Activated CD8-positive, alpha-beta T cell treated with anti-CD3 and anti-CD28 coated beads for 36 hours (primary cell): ENCODE measurements at regions of chr6 and their contacts with region 1.

Region 1: DNA sequence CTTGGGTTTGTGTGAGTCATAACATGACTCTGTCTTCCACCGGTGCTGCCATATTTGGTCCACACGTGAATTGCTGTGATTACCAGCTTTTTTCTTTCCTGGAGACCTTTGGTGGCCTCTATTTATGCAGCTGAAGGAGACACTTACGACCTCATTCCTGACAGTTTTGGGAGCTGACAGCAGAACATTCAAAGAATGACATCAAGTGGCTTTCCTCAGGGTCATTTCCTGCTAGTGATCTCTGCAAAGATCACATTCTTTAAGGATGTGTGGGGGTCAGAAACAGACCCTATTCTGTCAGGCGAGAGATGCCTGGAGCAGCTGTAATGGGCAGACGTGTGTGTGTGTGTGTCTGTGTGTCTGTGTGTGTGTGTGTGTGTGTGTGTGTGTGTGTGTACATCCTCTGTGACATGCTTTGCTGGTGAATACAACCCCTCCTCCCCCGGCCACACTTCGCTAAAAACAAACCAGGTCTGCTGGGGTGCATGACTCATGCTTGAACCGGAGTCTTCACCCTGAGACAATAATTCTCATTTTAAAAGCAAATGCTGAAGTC is 115.6 kb downstream of the TMEM170B start:
- DNase-seq: peak; percentile 78
- ATAC-seq: peak; percentile 90
- H3K4me3 Mint-ChIP-seq: no peak overlapping the region
- H3K27ac Mint-ChIP-seq: no peak overlapping the region
- H3K4me1 Mint-ChIP-seq: peaks cover 16% of the 10 kb centered on the region
- H3K27me3 Mint-ChIP-seq: peaks cover 10% of the 10 kb centered on the region
- CTCF ChIP-seq: no peak

Region 2: GRCh38 chr6:11665604-11666326 is 12.7 kb after region 1 on chr6:
- CTCF ChIA-PET with region 1: interaction called, 46 read pairs
- POLR2A ChIA-PET with region 1: no interaction called
- intact Hi-C with region 1: no loop called
- DNase-seq: no peak
- ATAC-seq: no peak
- H3K4me3 Mint-ChIP-seq: no peak overlapping the region
- H3K27ac Mint-ChIP-seq: no peak overlapping the region
- H3K4me1 Mint-ChIP-seq: peaks cover 10% of the 10 kb centered on the region
- H3K27me3 Mint-ChIP-seq: peaks cover 9% of the 10 kb centered on the region
- CTCF ChIP-seq: no peak

Region 3: DNA sequence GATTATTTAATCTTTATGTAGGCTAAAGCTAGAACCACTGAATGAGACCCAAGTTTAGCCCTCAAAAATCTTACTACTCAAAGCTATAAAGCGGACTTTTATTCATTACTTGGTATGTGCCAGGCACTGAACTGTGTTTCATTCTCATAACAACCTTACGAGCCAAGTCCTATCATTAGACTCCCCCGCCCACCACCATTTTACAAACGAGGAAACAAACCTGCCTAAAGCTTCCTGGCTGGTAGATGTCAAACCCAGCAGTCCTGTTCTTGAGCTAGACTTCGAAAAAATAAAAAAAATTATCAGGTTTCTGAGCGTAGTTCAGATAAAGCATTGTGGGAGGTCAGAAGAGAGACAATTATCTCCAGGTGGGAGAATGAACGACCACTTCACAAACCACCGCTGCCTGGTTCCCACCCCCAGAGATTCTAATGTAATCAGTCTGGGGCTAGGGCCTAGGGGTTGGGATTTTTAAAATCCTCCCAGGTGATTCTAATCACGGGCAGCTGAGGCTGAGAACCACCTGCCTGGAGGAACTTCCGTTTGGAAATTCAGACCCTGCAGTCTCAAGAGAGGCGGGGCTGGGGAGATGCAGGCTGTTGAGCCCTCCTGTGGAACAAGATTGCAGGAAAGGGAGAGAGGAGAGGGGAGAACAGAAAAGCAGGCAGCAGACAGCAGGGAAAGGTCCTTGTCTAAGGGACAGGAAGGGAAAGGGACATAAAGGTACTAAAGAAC is 116.9 kb after region 1 on chr6:
- CTCF ChIA-PET with region 1: no interaction called
- POLR2A ChIA-PET with region 1: no interaction called
- intact Hi-C with region 1: no loop called
- DNase-seq: no peak
- ATAC-seq: no peak
- H3K4me3 Mint-ChIP-seq: no peak overlapping the region
- H3K27ac Mint-ChIP-seq: no peak overlapping the region
- H3K4me1 Mint-ChIP-seq: peaks cover 16% of the 10 kb centered on the region
- H3K27me3 Mint-ChIP-seq: no peaks in the 10 kb centered on the region
- CTCF ChIP-seq: no peak

Region 4: GRCh38 chr6:11810039-11810541 is 157.0 kb after region 1 on chr6:
- CTCF ChIA-PET with region 1: no interaction called
- POLR2A ChIA-PET with region 1: no interaction called
- intact Hi-C with region 1: no loop called
- DNase-seq: no peak
- ATAC-seq: no peak
- H3K4me3 Mint-ChIP-seq: no peak overlapping the region
- H3K27ac Mint-ChIP-seq: no peak overlapping the region
- H3K4me1 Mint-ChIP-seq: peaks cover 34% of the 10 kb centered on the region
- H3K27me3 Mint-ChIP-seq: no peaks in the 10 kb centered on the region
- CTCF ChIP-seq: no peak

Region 5: GRCh38 chr6:12233693-12234571 is 580.8 kb after region 1 on chr6:
- CTCF ChIA-PET with region 1: interaction called, 24 read pairs
- POLR2A ChIA-PET with region 1: no interaction called
- intact Hi-C with region 1: loop called (anchors 5 kb)
- DNase-seq: peak; percentile 62
- ATAC-seq: peak; percentile 94
- H3K4me3 Mint-ChIP-seq: no peak overlapping the region
- H3K27ac Mint-ChIP-seq: no peak overlapping the region
- H3K4me1 Mint-ChIP-seq: peaks cover 42% of the 10 kb centered on the region
- H3K27me3 Mint-ChIP-seq: no peaks in the 10 kb centered on the region
- CTCF ChIP-seq: peak; percentile 72

Region 6: DNA sequence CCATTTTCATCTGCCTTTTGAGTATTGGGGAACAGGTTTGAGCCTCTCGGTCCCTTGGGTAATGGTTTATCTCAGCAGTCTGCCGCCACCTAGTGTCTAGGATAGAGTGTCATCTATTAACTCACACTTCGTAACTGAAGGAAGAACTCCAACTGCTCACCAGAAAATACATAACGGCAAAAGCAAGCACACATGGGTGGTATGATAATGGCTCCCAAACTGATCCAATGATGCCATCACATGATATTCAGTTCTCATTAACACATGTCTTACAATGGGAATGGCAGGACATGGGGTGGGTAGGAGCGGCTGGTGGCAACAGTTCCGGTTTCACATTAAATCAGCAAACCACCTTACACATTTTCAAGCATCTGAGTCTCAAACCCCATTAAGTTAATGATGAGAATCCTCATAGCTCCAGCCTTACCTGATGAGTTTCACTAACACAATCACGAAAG is 952.8 kb after region 1 on chr6:
- CTCF ChIA-PET with region 1: interaction called, 7 read pairs
- POLR2A ChIA-PET with region 1: no interaction called
- intact Hi-C with region 1: loop called (anchors 10 kb)
- DNase-seq: peak; percentile 62
- ATAC-seq: peak; percentile 75
- H3K4me3 Mint-ChIP-seq: no peak overlapping the region
- H3K27ac Mint-ChIP-seq: no peak overlapping the region
- H3K4me1 Mint-ChIP-seq: no peaks in the 10 kb centered on the region
- H3K27me3 Mint-ChIP-seq: peaks cover 14% of the 10 kb centered on the region
- CTCF ChIP-seq: peak; percentile 65